ENCODE measurements at regions of chr1 and their contacts with region 1.

Region 1: DNA sequence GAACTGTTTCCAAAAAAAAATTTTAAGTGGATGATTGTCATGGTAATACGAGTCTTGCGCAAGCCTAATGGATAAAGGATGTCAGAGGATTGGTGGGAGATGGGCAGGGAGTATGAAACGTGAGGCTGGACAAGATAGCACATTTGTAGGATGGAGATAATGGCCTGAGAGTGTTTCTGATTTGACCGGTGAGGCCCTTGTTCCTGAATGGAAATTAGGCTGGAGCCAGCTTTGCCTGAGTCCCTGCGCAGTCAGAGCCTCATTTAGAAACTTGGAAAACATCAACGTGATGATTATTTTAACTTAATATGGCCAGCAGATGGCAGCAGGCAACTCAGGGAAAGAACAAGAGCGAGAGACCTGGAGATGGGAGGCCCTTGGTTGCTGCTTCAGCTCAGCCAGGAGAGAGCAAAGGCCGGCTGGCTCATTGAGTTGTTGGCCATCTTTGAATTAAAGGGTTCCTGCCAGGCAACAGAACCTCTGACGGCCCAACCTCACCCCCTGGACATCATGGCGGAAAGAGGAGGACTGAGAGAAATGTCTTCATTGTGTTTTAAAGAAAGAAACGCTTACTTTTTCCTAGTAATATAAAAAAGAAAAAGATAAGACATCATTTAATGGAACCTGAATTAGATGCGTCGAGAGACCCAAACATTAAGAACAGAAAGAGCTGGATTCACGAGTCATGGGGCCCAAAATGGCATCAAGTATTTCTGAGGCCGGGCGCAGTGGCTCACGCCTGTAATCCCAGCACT is 80.3 kb downstream of the SELENOF start:
- DNase-seq: peak; percentile 76
- H3K4me3 ChIP-seq: no peak overlapping the region
- H3K27ac ChIP-seq: no peak overlapping the region
- H3K4me1 ChIP-seq: no peaks in the 10 kb centered on the region
- H3K27me3 ChIP-seq: no peaks in the 10 kb centered on the region
- CTCF ChIP-seq: peak; percentile 28

Region 2: GRCh38 chr1:86965012-86965826 is 131.6 kb after region 1 on chr1:
- intact Hi-C with region 1: loop called (anchors 2 kb)
- DNase-seq: peak; percentile 19
- H3K4me3 ChIP-seq: no peak overlapping the region
- H3K27ac ChIP-seq: no peak overlapping the region
- H3K4me1 ChIP-seq: no peaks in the 10 kb centered on the region
- H3K27me3 ChIP-seq: no peaks in the 10 kb centered on the region
- CTCF ChIP-seq: peak; percentile 54

Region 3: GRCh38 chr1:87074001-87074795 is 240.6 kb after region 1 on chr1:
- intact Hi-C with region 1: no loop called
- DNase-seq: no peak
- H3K4me3 ChIP-seq: no peak overlapping the region
- H3K27ac ChIP-seq: no peak overlapping the region
- H3K4me1 ChIP-seq: no peaks in the 10 kb centered on the region
- H3K27me3 ChIP-seq: no peaks in the 10 kb centered on the region
- CTCF ChIP-seq: no peak

Region 4: DNA sequence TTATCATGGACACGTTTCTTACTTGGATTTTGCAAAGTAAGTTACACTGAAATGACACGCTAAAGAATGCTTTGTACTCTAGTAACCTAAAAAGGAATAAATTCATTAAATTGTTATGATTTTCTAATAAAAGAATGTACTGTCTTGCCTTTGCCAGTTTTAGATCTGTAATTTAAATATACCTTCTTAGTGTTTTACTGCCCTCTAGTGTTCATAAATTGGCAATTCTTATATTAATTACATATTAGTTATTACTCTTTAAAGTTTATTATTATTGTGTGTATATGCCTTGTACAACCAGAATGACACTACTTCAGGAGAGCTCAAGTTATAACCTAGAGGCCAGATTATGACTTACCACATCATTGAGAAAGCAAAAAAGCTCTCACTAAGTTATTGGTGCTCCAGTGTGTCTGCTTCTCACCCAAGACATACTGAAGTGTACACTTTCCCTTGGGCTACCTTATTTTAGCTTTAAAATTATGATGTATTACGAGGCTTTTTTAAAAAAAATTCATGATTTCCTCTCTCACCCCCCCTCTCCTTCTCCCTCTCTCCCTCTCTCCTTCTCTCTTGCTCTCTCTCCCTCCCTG is 250.7 kb after region 1 on chr1:
- intact Hi-C with region 1: loop called (anchors 5 kb)
- DNase-seq: no peak
- H3K4me3 ChIP-seq: no peak overlapping the region
- H3K27ac ChIP-seq: no peak overlapping the region
- H3K4me1 ChIP-seq: no peaks in the 10 kb centered on the region
- H3K27me3 ChIP-seq: no peaks in the 10 kb centered on the region
- CTCF ChIP-seq: peak; percentile 55